Heart right ventricle (tissue), 16 donors: ENCODE measurements at regions of chr12 and their contacts with region 1.

Region 1: GRCh38 chr12:64256166-64256800 is 34.2 kb upstream of the KICS2 start:
- DNase-seq: peak in 1 of 2 donors; percentile 29
- ATAC-seq: peak in 4 of 8 donors; percentile 25 to 52 (median 36)
- H3K4me3 ChIP-seq: peak overlapping the region in 3 of 10 donors; percentile 0 to 15 (median 11)
- H3K27ac ChIP-seq: no peak overlapping the region
- H3K4me1 ChIP-seq: peaks cover 0 to 12% (median 0%) of the 10 kb centered on the region in 9 donors
- H3K27me3 ChIP-seq: no peaks in the 10 kb centered on the region
- CTCF ChIP-seq: peak; percentile 54 to 83 (median 78)

Region 2: GRCh38 chr12:63826006-63826585 is 430.2 kb before region 1 on chr12:
- intact Hi-C with region 1: loop called in 1 of 10 experiments (anchors 1 kb)
- DNase-seq: no peak
- ATAC-seq: peak in 6 of 8 donors; percentile 38 to 64 (median 49)
- H3K4me3 ChIP-seq: no peak overlapping the region
- H3K27ac ChIP-seq: no peak overlapping the region
- H3K4me1 ChIP-seq: peaks cover 0 to 6% (median 0%) of the 10 kb centered on the region in 9 donors
- H3K27me3 ChIP-seq: peaks cover 0 to 16% (median 0%) of the 10 kb centered on the region in 7 donors
- CTCF ChIP-seq: peak; percentile 53 to 79 (median 71)

Region 3: GRCh38 chr12:63836936-63837335 is 419.3 kb before region 1 on chr12:
- intact Hi-C with region 1: loop called (anchors 1 to 5 kb)
- DNase-seq: no peak
- ATAC-seq: no peak
- H3K4me3 ChIP-seq: no peak overlapping the region
- H3K27ac ChIP-seq: no peak overlapping the region
- H3K4me1 ChIP-seq: no peaks in the 10 kb centered on the region
- H3K27me3 ChIP-seq: no peaks in the 10 kb centered on the region
- CTCF ChIP-seq: no peak

Region 4: DNA sequence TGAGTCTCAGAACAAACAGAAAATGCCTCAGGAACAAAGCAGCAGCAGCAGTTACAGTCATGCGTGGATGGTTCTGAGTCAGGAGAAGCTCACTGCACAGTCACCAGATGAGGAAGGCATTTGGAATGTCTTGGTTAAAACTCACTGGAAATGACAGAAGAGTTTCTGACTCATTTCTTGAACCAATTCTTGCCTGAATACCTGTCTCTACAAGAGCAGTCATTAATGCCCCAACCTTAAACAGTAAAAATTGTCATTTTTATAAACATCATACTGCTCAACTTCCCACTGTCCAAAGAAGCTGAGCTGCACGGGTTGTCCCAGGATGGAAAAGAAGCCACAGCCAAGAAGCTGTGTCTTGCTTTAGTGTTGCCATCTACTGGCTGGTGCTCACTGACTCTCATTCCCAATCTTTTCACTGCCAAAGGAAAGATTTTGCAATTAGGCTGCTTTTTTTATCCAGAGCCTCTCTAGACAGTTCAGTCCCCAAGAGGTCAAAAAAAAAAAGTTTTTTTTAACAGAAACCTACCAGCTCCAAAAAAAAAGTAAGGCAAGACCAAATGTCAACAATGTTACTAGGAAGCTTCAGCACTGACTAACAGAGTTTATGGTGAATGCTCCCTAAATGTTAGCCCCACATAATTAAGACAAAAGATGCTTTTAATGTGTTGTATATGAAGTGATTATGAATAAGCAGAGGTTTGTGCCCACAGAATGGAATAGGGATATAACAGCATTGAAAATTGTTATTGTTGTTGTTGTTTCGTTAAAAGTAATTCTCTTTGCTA is 74.6 kb before region 1 on chr12:
- intact Hi-C with region 1: loop called in 7 of 10 experiments (anchors 5 to 10 kb)
- DNase-seq: peak in 1 of 2 donors; percentile 58
- ATAC-seq: peak; percentile 84 to 94 (median 87)
- H3K4me3 ChIP-seq: peak overlapping the region in 1 of 10 donors; percentile 6
- H3K27ac ChIP-seq: peak overlapping the region in 6 of 10 donors; percentile 15 to 78 (median 43)
- H3K4me1 ChIP-seq: peaks cover 0 to 36% (median 12%) of the 10 kb centered on the region in 9 donors
- H3K27me3 ChIP-seq: no peaks in the 10 kb centered on the region
- CTCF ChIP-seq: peak in 8 of 9 donors; percentile 49 to 84 (median 70)